Transverse colon (tissue), 4 donors: ENCODE measurements at regions of chr9 and their contacts with region 1.

Region 1: GRCh38 chr9:97598461-97599288 is 34.5 kb downstream of the TSTD2 start:
- DNase-seq: peak; percentile 80
- H3K4me3 ChIP-seq: no peak overlapping the region
- H3K27ac ChIP-seq: no peak overlapping the region
- H3K4me1 ChIP-seq: peaks cover 3 to 27% (median 14%) of the 10 kb centered on the region in 4 donors
- H3K27me3 ChIP-seq: no peaks in the 10 kb centered on the region
- CTCF ChIP-seq: peak; percentile 69 to 82 (median 80)
- EP300 ChIP-seq: no peak
- POLR2A ChIP-seq: no peak

Region 2: GRCh38 chr9:97468658-97469448 is 129.8 kb before region 1 on chr9:
- in situ Hi-C with region 1: loop called in 2 of 4 experiments (anchors 5 to 10 kb)
- intact Hi-C with region 1: loop called (anchors 2 kb)
- DNase-seq: peak; percentile 75
- H3K4me3 ChIP-seq: no peak overlapping the region
- H3K27ac ChIP-seq: peak overlapping the region; percentile 7 to 65 (median 29)
- H3K4me1 ChIP-seq: peaks cover 0 to 12% (median 2%) of the 10 kb centered on the region in 4 donors
- H3K27me3 ChIP-seq: no peaks in the 10 kb centered on the region
- CTCF ChIP-seq: peak; percentile 63 to 84 (median 71)
- EP300 ChIP-seq: no peak
- POLR2A ChIP-seq: no peak